ENCODE measurements at regions of chr16 and their contacts with region 1.

Region 1: DNA sequence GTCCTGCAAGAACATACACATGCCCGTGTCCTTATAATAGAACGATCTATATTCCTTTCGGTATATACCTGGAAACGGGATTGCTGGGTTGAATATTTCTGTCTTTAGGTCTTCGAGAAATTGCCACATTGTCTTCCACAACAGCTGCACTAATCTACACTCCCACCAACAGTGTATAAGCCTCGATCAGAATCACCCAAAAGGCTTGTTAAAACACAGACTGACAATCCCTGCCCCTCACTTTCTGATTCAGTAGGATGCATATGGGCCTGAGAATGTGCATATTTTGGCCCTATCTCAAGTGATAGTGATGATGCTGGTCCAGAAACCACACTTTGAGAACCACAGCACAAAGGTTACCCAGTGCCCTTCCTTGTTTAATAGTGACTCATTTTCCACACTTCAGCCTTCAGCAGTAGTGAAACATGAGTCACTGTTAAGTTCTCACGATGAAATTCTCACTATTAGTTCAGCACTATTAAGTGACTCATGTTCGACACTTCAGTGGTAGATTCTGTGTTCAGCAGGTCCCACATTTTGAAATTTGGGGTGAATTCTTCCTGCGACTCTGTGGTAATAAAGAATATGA is 215.6 kb downstream of the GRIN2A start:
- DNase-seq: peak; percentile 86
- ATAC-seq: peak; percentile 92
- H3K4me3 ChIP-seq: no peak overlapping the region
- H3K27ac ChIP-seq: no peak overlapping the region
- H3K4me1 ChIP-seq: peaks cover 3% of the 10 kb centered on the region
- H3K27me3 ChIP-seq: no peaks in the 10 kb centered on the region
- CTCF ChIP-seq: no peak
- EP300 ChIP-seq: peak; percentile 73 to 81; a peak in 2 of 4 replicates
- POLR2A ChIP-seq: no peak
- RAD21 ChIP-seq: no peak

Region 2: GRCh38 chr16:9778849-9779248 is 187.8 kb before region 1 on chr16:
- CTCF ChIA-PET with region 1: no interaction called
- POLR2A ChIA-PET with region 1: no interaction called
- RAD21 ChIA-PET with region 1: no interaction called
- SMC1A ChIA-PET with region 1: no interaction called
- in situ Hi-C with region 1: no loop called
- intact Hi-C with region 1: no loop called
- DNase-seq: no peak
- ATAC-seq: no peak
- H3K4me3 ChIP-seq: no peak overlapping the region
- H3K27ac ChIP-seq: no peak overlapping the region
- H3K4me1 ChIP-seq: peaks cover 4% of the 10 kb centered on the region; the same call in 1 of the 2 replicates
- H3K27me3 ChIP-seq: no peaks in the 10 kb centered on the region
- CTCF ChIP-seq: no peak
- EP300 ChIP-seq: no peak
- POLR2A ChIP-seq: no peak
- RAD21 ChIP-seq: no peak

Region 3: DNA sequence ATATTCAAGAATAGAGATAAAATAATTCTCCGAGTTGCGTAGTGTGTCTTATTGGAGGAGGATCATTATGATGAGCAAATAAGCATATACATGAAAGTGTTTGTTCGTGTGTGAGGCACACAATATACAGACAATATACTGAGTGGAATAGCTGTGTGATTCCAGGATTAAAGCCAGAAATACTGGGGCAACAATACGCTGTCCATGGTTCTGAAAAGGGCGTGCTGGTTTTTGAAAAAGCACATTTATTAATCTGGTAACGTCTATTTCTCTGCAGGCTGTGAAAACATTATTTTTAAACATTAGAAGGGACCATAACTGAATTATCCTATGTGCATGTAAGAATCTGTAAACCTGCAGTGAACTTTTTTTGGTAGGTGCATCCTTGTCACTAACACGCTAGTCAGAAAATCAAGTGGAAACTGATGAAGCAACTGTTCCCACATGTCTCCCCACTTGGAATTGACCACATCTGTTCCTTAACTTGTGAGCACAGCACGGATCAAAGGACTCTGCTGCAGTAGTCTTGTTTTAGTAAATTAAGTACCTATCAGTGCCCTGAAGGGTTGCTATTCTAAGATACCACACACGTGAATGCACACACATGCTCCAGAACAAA is 130.4 kb before region 1 on chr16:
- CTCF ChIA-PET with region 1: no interaction called
- POLR2A ChIA-PET with region 1: no interaction called
- RAD21 ChIA-PET with region 1: interaction called, 4 read pairs
- SMC1A ChIA-PET with region 1: interaction called, 5 read pairs
- in situ Hi-C with region 1: no loop called
- intact Hi-C with region 1: loop called (anchors 2 kb)
- DNase-seq: no peak
- ATAC-seq: no peak
- H3K4me3 ChIP-seq: no peak overlapping the region
- H3K27ac ChIP-seq: no peak overlapping the region
- H3K4me1 ChIP-seq: peaks cover 4% of the 10 kb centered on the region; the same call in 1 of the 2 replicates
- H3K27me3 ChIP-seq: no peaks in the 10 kb centered on the region
- CTCF ChIP-seq: no peak
- EP300 ChIP-seq: no peak
- POLR2A ChIP-seq: no peak
- RAD21 ChIP-seq: no peak

Region 4: GRCh38 chr16:9913604-9914326 is 52.9 kb before region 1 on chr16:
- CTCF ChIA-PET with region 1: interaction called, 5 read pairs
- POLR2A ChIA-PET with region 1: interaction called, 3 read pairs
- RAD21 ChIA-PET with region 1: interaction called, 3 read pairs
- SMC1A ChIA-PET with region 1: interaction called, 8 read pairs
- in situ Hi-C with region 1: no loop called
- intact Hi-C with region 1: loop called (anchors 2 kb)
- DNase-seq: no peak
- ATAC-seq: no peak; the same call in 2 of the 3 replicates
- H3K4me3 ChIP-seq: no peak overlapping the region
- H3K27ac ChIP-seq: peak overlapping the region; percentile 63
- H3K4me1 ChIP-seq: peaks cover 17% of the 10 kb centered on the region
- H3K27me3 ChIP-seq: no peaks in the 10 kb centered on the region
- CTCF ChIP-seq: no peak
- EP300 ChIP-seq: no peak
- POLR2A ChIP-seq: no peak
- RAD21 ChIP-seq: no peak

Region 5: GRCh38 chr16:9946022-9946720 is 20.5 kb before region 1 on chr16:
- CTCF ChIA-PET with region 1: interaction called, 7 read pairs
- POLR2A ChIA-PET with region 1: no interaction called
- RAD21 ChIA-PET with region 1: interaction called, 4 read pairs
- SMC1A ChIA-PET with region 1: interaction called, 14 read pairs
- in situ Hi-C with region 1: no loop called
- intact Hi-C with region 1: no loop called
- DNase-seq: no peak
- ATAC-seq: peak; percentile 77
- H3K4me3 ChIP-seq: no peak overlapping the region
- H3K27ac ChIP-seq: no peak overlapping the region
- H3K4me1 ChIP-seq: no peaks in the 10 kb centered on the region
- H3K27me3 ChIP-seq: no peaks in the 10 kb centered on the region
- CTCF ChIP-seq: peak; percentile 29 to 34 (median 31); a peak in 4 of 6 replicates
- EP300 ChIP-seq: no peak
- POLR2A ChIP-seq: no peak
- RAD21 ChIP-seq: peak; percentile 66

Measured in GM12878 (cell line).